ENCODE measurements at regions of chr6 and their contacts with region 1.

Region 1: GRCh38 chr6:99559057-99559456 is 9.4 kb downstream of the CCNC start:
- DNase-seq: no peak
- ATAC-seq: no peak
- H3K4me3 ChIP-seq: no peak overlapping the region
- H3K27ac ChIP-seq: no peak overlapping the region
- H3K4me1 ChIP-seq: peaks cover 14% of the 10 kb centered on the region
- H3K27me3 ChIP-seq: no peaks in the 10 kb centered on the region
- CTCF ChIP-seq: no peak

Region 2: DNA sequence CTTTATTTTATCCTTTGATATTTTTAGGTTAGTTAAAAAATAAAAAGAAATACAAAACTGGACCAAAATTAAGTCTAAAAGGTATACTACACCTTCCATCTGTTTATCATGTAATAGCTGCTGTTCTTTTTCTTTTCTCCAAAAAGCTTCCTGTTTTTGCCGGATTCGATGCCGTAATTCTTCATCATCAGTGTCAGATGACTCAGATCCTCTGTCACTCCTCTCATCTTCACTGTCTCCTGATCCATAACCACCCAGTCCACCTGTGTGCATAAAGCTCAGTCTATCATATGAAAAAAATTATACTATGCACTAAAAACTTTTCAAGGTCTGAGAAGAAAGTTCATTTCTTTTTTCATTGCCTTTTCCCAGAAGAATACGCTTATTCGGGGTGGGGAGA is 156.6 kb before region 1 on chr6:
- intact Hi-C with region 1: loop called in 1 of 2 experiments (anchors 10 kb)
- DNase-seq: no peak
- ATAC-seq: no peak
- H3K4me3 ChIP-seq: no peak overlapping the region
- H3K27ac ChIP-seq: no peak overlapping the region
- H3K4me1 ChIP-seq: no peaks in the 10 kb centered on the region
- H3K27me3 ChIP-seq: no peaks in the 10 kb centered on the region
- CTCF ChIP-seq: no peak

Region 3: DNA sequence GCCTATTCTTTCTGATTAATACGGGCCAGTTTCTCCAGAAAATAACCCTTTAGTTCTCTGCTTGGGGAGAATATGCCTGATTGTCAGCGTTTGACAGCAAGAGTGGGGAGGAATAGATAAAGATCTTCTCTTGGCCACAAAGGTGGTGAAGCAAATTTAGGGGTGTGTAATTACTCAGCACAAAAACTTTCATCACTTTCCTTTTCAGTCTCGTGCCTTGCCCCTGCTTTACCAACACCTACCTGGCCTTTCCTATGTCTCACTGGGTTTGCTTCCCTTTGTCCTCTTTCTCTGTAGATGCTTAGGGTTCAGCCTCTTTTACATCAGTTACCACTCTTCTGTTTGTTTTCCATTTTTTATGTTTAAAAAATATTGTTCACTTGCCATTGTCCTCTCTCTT is 335.8 kb after region 1 on chr6:
- intact Hi-C with region 1: no loop called
- DNase-seq: no peak
- ATAC-seq: no peak
- H3K4me3 ChIP-seq: no peak overlapping the region
- H3K27ac ChIP-seq: no peak overlapping the region
- H3K4me1 ChIP-seq: no peaks in the 10 kb centered on the region
- H3K27me3 ChIP-seq: no peaks in the 10 kb centered on the region
- CTCF ChIP-seq: no peak

Measured in psoas muscle (tissue), 8 donors.